ENCODE measurements at regions of chr7 and their contacts with region 1.

Region 1: GRCh38 chr7:101856473-101857357 is 39.3 kb downstream of the CUX1 start:
- DNase-seq: peak; percentile 92
- ATAC-seq: peak; percentile 97
- H3K4me3 ChIP-seq: peak overlapping the region; percentile 31 to 57
- H3K27ac ChIP-seq: peak overlapping the region; percentile 92
- H3K4me1 ChIP-seq: peaks cover 20% of the 10 kb centered on the region
- H3K27me3 ChIP-seq: no peaks in the 10 kb centered on the region
- CTCF ChIP-seq: peak; percentile 77

Region 2: GRCh38 chr7:101553018-101553770 is 303.5 kb before region 1 on chr7:
- CTCF ChIA-PET with region 1: no interaction called
- POLR2A ChIA-PET with region 1: no interaction called
- in situ Hi-C with region 1: no loop called
- intact Hi-C with region 1: no loop called
- DNase-seq: no peak
- ATAC-seq: peak; percentile 56
- H3K4me3 ChIP-seq: no peak overlapping the region
- H3K27ac ChIP-seq: no peak overlapping the region
- H3K4me1 ChIP-seq: no peaks in the 10 kb centered on the region
- H3K27me3 ChIP-seq: no peaks in the 10 kb centered on the region
- CTCF ChIP-seq: no peak

Region 3: GRCh38 chr7:101630591-101630990 is 226.1 kb before region 1 on chr7:
- CTCF ChIA-PET with region 1: no interaction called
- POLR2A ChIA-PET with region 1: interaction called, 10 read pairs
- in situ Hi-C with region 1: no loop called
- intact Hi-C with region 1: no loop called
- DNase-seq: no peak
- ATAC-seq: peak; percentile 71
- H3K4me3 ChIP-seq: peak overlapping the region in 1 of 2 experiments; percentile 0; a peak in 1 of 4 replicates
- H3K27ac ChIP-seq: no peak overlapping the region
- H3K4me1 ChIP-seq: peaks cover 15% of the 10 kb centered on the region
- H3K27me3 ChIP-seq: no peaks in the 10 kb centered on the region
- CTCF ChIP-seq: no peak

Region 4: DNA sequence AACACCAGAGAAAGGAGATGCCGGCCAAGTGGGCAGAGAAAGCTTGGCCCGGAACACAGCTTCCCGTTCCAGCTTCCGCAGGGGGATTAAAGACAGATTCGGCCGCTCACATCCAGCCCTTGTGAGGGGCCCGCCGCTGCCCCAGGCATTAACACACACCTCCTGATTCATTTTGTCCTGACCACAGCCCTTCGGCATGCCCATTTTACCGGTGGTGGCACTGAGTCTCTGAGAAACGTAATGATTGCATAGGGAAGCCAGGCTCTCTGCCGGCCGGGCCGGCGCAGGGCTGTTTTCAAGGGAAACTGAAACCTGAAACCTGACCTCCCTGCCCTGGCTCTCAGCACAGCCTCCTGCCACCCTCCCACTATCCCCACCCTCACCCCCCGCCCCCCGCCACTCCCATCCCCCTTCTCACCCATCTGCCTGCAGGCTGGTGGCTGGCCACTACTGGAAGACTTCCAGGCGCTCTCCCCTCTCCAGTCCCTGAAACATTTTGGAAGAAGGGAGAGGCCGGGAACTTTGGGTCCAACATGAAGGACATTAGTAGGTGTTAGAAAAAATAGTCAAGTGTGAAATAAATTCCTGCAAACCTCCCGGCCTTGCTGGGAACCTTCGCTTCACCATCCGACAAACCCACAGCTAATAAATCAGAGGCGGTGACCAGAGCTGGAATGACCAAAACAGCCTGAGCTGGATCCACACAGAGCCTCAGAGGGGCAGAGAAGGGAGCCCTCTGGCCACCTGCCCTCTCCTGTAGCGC is 122.8 kb before region 1 on chr7:
- CTCF ChIA-PET with region 1: no interaction called
- POLR2A ChIA-PET with region 1: no interaction called
- in situ Hi-C with region 1: no loop called
- intact Hi-C with region 1: no loop called
- DNase-seq: no peak
- ATAC-seq: no peak
- H3K4me3 ChIP-seq: no peak overlapping the region
- H3K27ac ChIP-seq: no peak overlapping the region
- H3K4me1 ChIP-seq: no peaks in the 10 kb centered on the region
- H3K27me3 ChIP-seq: no peaks in the 10 kb centered on the region
- CTCF ChIP-seq: no peak

Region 5: GRCh38 chr7:101915496-101915895 is 58.8 kb after region 1 on chr7:
- CTCF ChIA-PET with region 1: no interaction called
- POLR2A ChIA-PET with region 1: interaction called, 10 read pairs
- in situ Hi-C with region 1: no loop called
- intact Hi-C with region 1: no loop called
- DNase-seq: no peak
- ATAC-seq: no peak
- H3K4me3 ChIP-seq: no peak overlapping the region
- H3K27ac ChIP-seq: no peak overlapping the region
- H3K4me1 ChIP-seq: no peaks in the 10 kb centered on the region
- H3K27me3 ChIP-seq: no peaks in the 10 kb centered on the region
- CTCF ChIP-seq: no peak